CD4-positive, alpha-beta T cell (primary cell): ENCODE measurements at regions of chr22 and their contacts with region 1.

Region 1: GRCh38 chr22:50148991-50149721 is 21.4 kb upstream of the PANX2 start:
- DNase-seq: peak; percentile 62 to 90 (median 71)
- ATAC-seq: peak; percentile 100
- H3K4me3 ChIP-seq: no peak overlapping the region
- H3K4me3 Mint-ChIP-seq: no peak overlapping the region
- H3K27ac ChIP-seq: no peak overlapping the region
- H3K27ac Mint-ChIP-seq: no peak overlapping the region
- H3K4me1 ChIP-seq: peaks cover 6% of the 10 kb centered on the region
- H3K4me1 Mint-ChIP-seq: peaks cover 4% of the 10 kb centered on the region
- H3K27me3 ChIP-seq: no peaks in the 10 kb centered on the region
- H3K27me3 Mint-ChIP-seq: no peaks in the 10 kb centered on the region
- CTCF ChIP-seq: peak; percentile 89

Region 2: DNA sequence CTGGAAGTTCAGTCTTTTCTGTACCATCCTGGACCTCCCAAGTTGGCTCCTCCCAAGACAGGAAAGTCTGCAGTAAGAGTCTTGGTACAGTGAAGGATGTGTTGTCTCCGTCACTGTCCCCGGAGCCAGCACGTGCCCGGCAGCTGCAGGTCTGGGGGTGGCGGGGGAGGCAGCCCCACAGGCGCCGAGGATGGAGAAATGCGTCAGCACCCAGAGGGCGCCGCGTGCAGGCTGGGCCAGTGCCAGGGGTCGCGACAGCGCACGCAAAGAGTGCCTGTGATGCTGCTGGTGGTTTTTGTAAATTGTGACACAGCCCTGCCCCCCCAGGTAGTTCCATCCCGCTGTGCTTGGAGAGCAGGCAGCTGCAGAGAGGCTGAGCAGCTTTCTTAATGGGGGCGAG is 1522.0 kb before region 1 on chr22:
- CTCF ChIA-PET with region 1: no interaction called
- POLR2A ChIA-PET with region 1: no interaction called
- intact Hi-C with region 1: no loop called
- DNase-seq: no peak
- ATAC-seq: no peak
- H3K4me3 ChIP-seq: no peak overlapping the region
- H3K4me3 Mint-ChIP-seq: no peak overlapping the region
- H3K27ac ChIP-seq: no peak overlapping the region
- H3K27ac Mint-ChIP-seq: no peak overlapping the region
- H3K4me1 ChIP-seq: no peaks in the 10 kb centered on the region
- H3K4me1 Mint-ChIP-seq: no peaks in the 10 kb centered on the region
- H3K27me3 ChIP-seq: peaks cover 0 to 6% of the 10 kb centered on the region in 2 experiments
- H3K27me3 Mint-ChIP-seq: no peaks in the 10 kb centered on the region
- CTCF ChIP-seq: no peak

Region 3: GRCh38 chr22:49657275-49657975 is 491.7 kb before region 1 on chr22:
- CTCF ChIA-PET with region 1: no interaction called
- POLR2A ChIA-PET with region 1: no interaction called
- intact Hi-C with region 1: no loop called
- DNase-seq: peak; percentile 42 to 91 (median 68)
- ATAC-seq: peak; percentile 87
- H3K4me3 ChIP-seq: peak overlapping the region; percentile 76
- H3K4me3 Mint-ChIP-seq: peak overlapping the region; percentile 95
- H3K27ac ChIP-seq: peak overlapping the region; percentile 34 to 60
- H3K27ac Mint-ChIP-seq: peak overlapping the region; percentile 81
- H3K4me1 ChIP-seq: peaks cover 32% of the 10 kb centered on the region
- H3K4me1 Mint-ChIP-seq: peaks cover 32% of the 10 kb centered on the region
- H3K27me3 ChIP-seq: no peaks in the 10 kb centered on the region
- H3K27me3 Mint-ChIP-seq: no peaks in the 10 kb centered on the region
- CTCF ChIP-seq: no peak

Region 4: DNA sequence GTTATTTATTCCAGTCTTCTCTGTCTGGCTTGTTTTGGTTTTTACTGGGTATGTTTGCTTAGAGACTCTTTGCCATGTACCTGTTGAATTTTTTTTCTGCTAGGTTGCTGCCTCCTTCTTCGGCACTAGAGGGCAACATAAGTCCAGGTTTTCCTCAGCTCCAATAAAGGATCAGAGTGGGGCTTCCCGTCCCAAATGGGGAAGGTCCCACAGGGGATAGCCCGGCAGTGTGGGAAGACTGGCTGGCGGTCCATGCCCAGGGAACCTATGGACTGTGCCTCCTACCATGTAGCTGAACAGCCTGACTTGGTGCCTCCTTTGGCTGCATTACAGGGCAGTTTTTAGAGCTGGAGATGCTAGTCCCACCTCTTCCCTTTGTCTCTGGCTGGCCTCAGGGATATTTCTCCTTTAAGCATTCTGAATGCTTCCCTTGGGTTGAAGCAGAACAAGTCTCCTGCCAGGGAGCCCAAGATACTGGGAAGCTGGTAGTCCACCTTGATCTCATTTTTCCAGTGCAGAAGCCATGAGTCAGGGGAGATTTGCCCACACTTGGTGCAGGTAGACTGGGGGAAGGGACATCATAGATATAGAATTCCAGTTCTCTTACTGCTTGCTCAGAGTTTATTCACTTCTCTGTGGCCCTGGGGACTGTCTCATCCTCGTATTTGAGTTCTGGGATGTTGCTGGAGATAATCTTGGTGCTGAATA is 381.6 kb before region 1 on chr22:
- CTCF ChIA-PET with region 1: no interaction called
- POLR2A ChIA-PET with region 1: no interaction called
- intact Hi-C with region 1: loop called (anchors 1 kb)
- DNase-seq: peak in 6 of 14 experiments; percentile 14 to 75 (median 54)
- ATAC-seq: peak; percentile 59
- H3K4me3 ChIP-seq: no peak overlapping the region
- H3K4me3 Mint-ChIP-seq: no peak overlapping the region
- H3K27ac ChIP-seq: no peak overlapping the region
- H3K27ac Mint-ChIP-seq: no peak overlapping the region
- H3K4me1 ChIP-seq: peaks cover 13% of the 10 kb centered on the region
- H3K4me1 Mint-ChIP-seq: no peaks in the 10 kb centered on the region
- H3K27me3 ChIP-seq: no peaks in the 10 kb centered on the region
- H3K27me3 Mint-ChIP-seq: no peaks in the 10 kb centered on the region
- CTCF ChIP-seq: peak; percentile 82

Region 5: GRCh38 chr22:49930739-49931412 is 218.3 kb before region 1 on chr22:
- CTCF ChIA-PET with region 1: no interaction called
- POLR2A ChIA-PET with region 1: no interaction called
- intact Hi-C with region 1: loop called in 1 of 2 experiments (anchors 10 kb)
- DNase-seq: peak in 12 of 14 experiments; percentile 22 to 83 (median 48)
- ATAC-seq: peak; percentile 37
- H3K4me3 ChIP-seq: no peak overlapping the region
- H3K4me3 Mint-ChIP-seq: peak overlapping the region; percentile 73
- H3K27ac ChIP-seq: peak overlapping the region in 1 of 2 donors; percentile 39
- H3K27ac Mint-ChIP-seq: peak overlapping the region; percentile 89
- H3K4me1 ChIP-seq: peaks cover 60% of the 10 kb centered on the region
- H3K4me1 Mint-ChIP-seq: peaks cover 42% of the 10 kb centered on the region
- H3K27me3 ChIP-seq: no peaks in the 10 kb centered on the region
- H3K27me3 Mint-ChIP-seq: no peaks in the 10 kb centered on the region
- CTCF ChIP-seq: peak; percentile 59

Region 6: DNA sequence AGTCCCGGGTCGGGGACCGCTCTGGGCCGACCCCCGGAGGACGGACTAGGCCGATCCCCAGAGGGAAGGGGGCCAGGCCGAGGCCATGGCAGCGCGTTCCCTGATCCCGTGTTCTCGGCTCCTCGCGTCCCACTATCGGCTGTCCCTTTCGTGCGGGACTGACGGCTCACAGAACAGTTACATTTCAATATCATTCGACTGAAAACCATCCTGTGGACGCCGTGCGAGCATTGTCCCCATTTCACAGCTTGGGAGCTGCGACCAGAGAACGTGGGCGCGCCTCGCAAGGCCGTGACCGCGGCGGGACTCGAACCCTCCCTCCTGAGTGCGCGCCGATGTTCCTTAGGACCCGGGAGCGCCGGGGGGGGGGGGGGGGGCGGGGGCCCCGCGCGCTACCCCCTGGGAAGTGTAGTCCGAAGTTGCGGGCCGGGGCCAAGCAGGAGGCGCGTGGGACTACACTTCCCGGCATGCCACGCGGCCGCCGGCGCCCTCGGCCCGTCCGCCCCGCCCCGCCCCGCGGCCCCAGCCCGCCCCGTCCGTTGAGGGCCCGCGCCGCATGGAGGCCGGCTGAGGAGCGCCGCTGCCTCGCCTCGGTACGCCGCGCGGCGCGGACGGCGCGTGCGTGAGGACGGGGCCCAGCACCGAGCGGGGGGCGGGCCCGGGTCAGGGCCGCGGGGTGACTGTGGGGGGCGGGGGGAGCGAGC is 36.4 kb after region 1 on chr22 and contains the start of gene TRABD:
- CTCF ChIA-PET with region 1: interaction called, 6 read pairs
- POLR2A ChIA-PET with region 1: interaction called, 10 read pairs
- intact Hi-C with region 1: loop called in 1 of 2 experiments (anchors 1 kb)
- DNase-seq: peak; percentile 77 to 96 (median 88)
- ATAC-seq: peak; percentile 67
- H3K4me3 ChIP-seq: peak within 1 kb of the TSS; percentile 62
- H3K4me3 Mint-ChIP-seq: peak within 1 kb of the TSS; percentile 95
- H3K27ac ChIP-seq: peak within 1 kb of the TSS; percentile 56 to 60
- H3K27ac Mint-ChIP-seq: peak within 1 kb of the TSS; percentile 96
- H3K4me1 ChIP-seq: peaks cover 53% of the 10 kb centered on the region
- H3K4me1 Mint-ChIP-seq: peaks cover 25% of the 10 kb centered on the region
- H3K27me3 ChIP-seq: peaks cover 0 to 2% of the 10 kb centered on the region in 2 experiments
- H3K27me3 Mint-ChIP-seq: peaks cover 4% of the 10 kb centered on the region
- CTCF ChIP-seq: no peak
- total RNA-seq, gene TRABD: 184 to 193 TPM

Region 7: DNA sequence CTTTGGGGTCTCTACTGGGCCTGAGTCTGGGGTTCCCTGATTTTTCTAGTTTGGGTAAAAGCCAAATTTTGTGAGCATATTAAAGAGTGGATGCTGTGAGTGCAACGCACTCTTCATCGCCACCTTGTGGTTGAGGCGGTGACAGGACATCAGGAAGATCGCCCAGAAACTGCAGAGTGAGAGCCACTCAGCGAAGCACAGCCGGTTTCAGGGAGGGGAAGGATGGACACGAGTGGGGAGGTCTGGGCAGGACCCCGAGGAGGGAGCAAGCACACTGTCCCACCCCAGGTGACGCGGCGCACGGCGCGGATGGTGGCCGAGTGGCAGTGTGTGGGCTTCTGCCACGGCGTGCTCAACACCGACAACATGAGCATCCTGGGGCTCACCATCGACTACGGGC is 60.7 kb after region 1 on chr22:
- CTCF ChIA-PET with region 1: interaction called, 6 read pairs
- POLR2A ChIA-PET with region 1: no interaction called
- intact Hi-C with region 1: loop called (anchors 1 kb)
- DNase-seq: peak; percentile 59 to 88 (median 68)
- ATAC-seq: peak; percentile 82
- H3K4me3 ChIP-seq: no peak overlapping the region
- H3K4me3 Mint-ChIP-seq: peak overlapping the region; percentile 11
- H3K27ac ChIP-seq: no peak overlapping the region
- H3K27ac Mint-ChIP-seq: peak overlapping the region; percentile 78
- H3K4me1 ChIP-seq: peaks cover 20% of the 10 kb centered on the region
- H3K4me1 Mint-ChIP-seq: peaks cover 26% of the 10 kb centered on the region
- H3K27me3 ChIP-seq: no peaks in the 10 kb centered on the region
- H3K27me3 Mint-ChIP-seq: no peaks in the 10 kb centered on the region
- CTCF ChIP-seq: peak; percentile 70

Region 8: GRCh38 chr22:50326959-50327710 is 178.0 kb after region 1 on chr22 and contains the start of gene DENND6B:
- CTCF ChIA-PET with region 1: no interaction called
- POLR2A ChIA-PET with region 1: no interaction called
- intact Hi-C with region 1: loop called in 1 of 2 experiments (anchors 5 kb)
- DNase-seq: peak; percentile 38 to 90 (median 62)
- ATAC-seq: peak; percentile 94
- H3K4me3 ChIP-seq: peak within 1 kb of the TSS; percentile 60
- H3K4me3 Mint-ChIP-seq: peak within 1 kb of the TSS; percentile 89
- H3K27ac ChIP-seq: no peak within 1 kb of the TSS
- H3K27ac Mint-ChIP-seq: peak within 1 kb of the TSS; percentile 35
- H3K4me1 ChIP-seq: peaks cover 15% of the 10 kb centered on the region
- H3K4me1 Mint-ChIP-seq: peaks cover 12% of the 10 kb centered on the region
- H3K27me3 ChIP-seq: no peaks in the 10 kb centered on the region
- H3K27me3 Mint-ChIP-seq: no peaks in the 10 kb centered on the region
- CTCF ChIP-seq: peak; percentile 30
- total RNA-seq, gene DENND6B: 1.8 to 1.9 TPM

Region 9: GRCh38 chr22:50341977-50342650 is 193.0 kb after region 1 on chr22:
- CTCF ChIA-PET with region 1: no interaction called
- POLR2A ChIA-PET with region 1: no interaction called
- intact Hi-C with region 1: loop called in 1 of 2 experiments (anchors 5 kb)
- DNase-seq: peak; percentile 80 to 94 (median 87)
- ATAC-seq: peak; percentile 53
- H3K4me3 ChIP-seq: peak overlapping the region; percentile 62
- H3K4me3 Mint-ChIP-seq: peak overlapping the region; percentile 88
- H3K27ac ChIP-seq: peak overlapping the region; percentile 84 to 85
- H3K27ac Mint-ChIP-seq: peak overlapping the region; percentile 98
- H3K4me1 ChIP-seq: peaks cover 27% of the 10 kb centered on the region
- H3K4me1 Mint-ChIP-seq: peaks cover 7% of the 10 kb centered on the region
- H3K27me3 ChIP-seq: no peaks in the 10 kb centered on the region
- H3K27me3 Mint-ChIP-seq: no peaks in the 10 kb centered on the region
- CTCF ChIP-seq: peak; percentile 95